ENCODE measurements at regions of chr11 and their contacts with region 1.

Region 1: DNA sequence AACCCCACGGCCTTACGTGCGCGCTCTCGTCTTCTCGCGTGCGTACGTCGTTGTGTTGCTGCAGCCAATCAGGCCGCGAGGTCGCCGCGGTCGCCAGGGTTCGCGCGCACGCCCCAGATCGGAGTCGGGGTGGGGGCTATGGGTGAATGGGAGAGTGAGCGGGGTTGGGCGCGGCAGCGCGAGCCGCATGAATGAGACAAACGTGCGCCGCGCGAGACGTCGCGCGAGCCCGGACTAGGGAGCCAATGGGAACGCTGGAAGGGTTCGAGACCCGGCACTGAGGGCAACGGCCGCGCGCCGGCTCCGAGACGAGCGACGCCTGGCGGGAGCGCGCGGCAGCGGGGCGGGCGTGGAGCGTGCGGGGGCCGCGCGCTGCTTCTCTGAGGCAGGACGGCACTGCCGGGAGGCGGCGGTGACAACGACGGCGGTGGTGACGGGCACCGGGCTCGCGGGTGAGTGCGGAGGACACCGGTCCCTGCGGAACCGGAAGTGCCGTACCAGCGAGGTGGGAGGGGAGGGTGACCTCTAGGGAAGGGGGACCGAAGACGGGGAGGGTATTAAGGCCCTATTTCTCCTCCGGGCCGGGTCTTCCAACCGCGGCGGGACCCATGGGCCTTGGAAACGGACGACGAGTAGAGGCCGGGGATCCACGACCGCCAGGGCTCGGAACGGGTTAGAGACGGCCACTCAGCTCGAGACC is at the start of gene ZDHHC5:
- DNase-seq: peak; percentile 100
- ATAC-seq: peak; percentile 88
- H3K4me3 Mint-ChIP-seq: peak within 1 kb of the TSS; percentile 99
- H3K27ac Mint-ChIP-seq: peak within 1 kb of the TSS; percentile 99
- H3K4me1 Mint-ChIP-seq: peaks cover 37% of the 10 kb centered on the region
- H3K27me3 Mint-ChIP-seq: no peaks in the 10 kb centered on the region
- total RNA-seq, gene ZDHHC5: 46.2 to 60.0 TPM

Region 2: GRCh38 chr11:57641011-57641807 is 26.7 kb before region 1 on chr11:
- CTCF ChIA-PET with region 1: no interaction called
- POLR2A ChIA-PET with region 1: no interaction called
- intact Hi-C with region 1: no loop called
- DNase-seq: peak; percentile 39
- ATAC-seq: peak; percentile 31
- H3K4me3 Mint-ChIP-seq: no peak overlapping the region
- H3K27ac Mint-ChIP-seq: no peak overlapping the region
- H3K4me1 Mint-ChIP-seq: peaks cover 10% of the 10 kb centered on the region
- H3K27me3 Mint-ChIP-seq: peaks cover 21% of the 10 kb centered on the region

Region 3: DNA sequence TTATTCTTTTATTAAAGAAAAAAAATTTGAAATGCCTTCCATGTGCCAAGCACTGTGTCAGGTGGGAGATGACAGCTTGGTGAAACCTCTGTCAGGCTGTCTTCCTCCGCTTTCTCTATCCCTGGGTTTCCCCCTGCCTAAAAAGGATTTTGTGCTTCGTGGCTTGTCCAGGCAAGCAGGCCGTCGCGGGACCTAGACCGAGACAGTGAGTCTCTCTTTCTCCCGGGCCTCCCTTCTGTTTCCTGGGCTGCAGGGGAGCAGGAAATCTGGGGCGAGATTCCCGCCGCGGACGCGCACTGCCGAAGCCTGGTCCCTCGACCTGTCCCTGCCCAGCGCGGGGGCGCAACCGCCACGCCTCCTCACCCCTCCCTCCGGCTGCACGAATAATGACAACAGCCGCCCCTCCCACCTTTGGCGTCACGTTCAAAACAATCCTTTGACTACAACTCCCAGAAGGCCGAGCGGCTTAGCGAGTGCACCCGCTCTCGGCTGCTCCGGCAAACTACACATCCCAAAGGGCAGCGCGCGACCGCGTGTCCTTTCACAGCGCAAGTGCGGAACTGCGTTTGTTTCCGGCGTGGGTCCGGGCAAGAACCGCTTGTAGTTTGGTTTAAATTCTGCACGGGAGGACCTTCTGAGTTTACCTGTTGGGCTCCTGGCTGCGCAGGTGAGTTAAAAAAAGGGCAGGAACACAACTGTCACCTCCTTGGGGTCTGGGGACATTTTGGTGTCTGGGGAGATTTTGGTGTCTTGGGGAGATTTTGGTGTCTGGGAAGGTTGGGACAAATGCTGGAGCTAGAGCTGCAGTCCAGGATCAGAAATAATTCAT is 10.5 kb before region 1 on chr11 and contains the start of gene CLP1:
- CTCF ChIA-PET with region 1: interaction called, 6 read pairs
- POLR2A ChIA-PET with region 1: interaction called, 5 read pairs
- intact Hi-C with region 1: loop called (anchors 1 kb)
- DNase-seq: peak; percentile 100
- ATAC-seq: peak; percentile 98
- H3K4me3 Mint-ChIP-seq: peak within 1 kb of the TSS; percentile 83
- H3K27ac Mint-ChIP-seq: peak within 1 kb of the TSS; percentile 95
- H3K4me1 Mint-ChIP-seq: peaks cover 29% of the 10 kb centered on the region
- H3K27me3 Mint-ChIP-seq: no peaks in the 10 kb centered on the region
- total RNA-seq, gene CLP1: 11.9 to 15.9 TPM

Region 4: DNA sequence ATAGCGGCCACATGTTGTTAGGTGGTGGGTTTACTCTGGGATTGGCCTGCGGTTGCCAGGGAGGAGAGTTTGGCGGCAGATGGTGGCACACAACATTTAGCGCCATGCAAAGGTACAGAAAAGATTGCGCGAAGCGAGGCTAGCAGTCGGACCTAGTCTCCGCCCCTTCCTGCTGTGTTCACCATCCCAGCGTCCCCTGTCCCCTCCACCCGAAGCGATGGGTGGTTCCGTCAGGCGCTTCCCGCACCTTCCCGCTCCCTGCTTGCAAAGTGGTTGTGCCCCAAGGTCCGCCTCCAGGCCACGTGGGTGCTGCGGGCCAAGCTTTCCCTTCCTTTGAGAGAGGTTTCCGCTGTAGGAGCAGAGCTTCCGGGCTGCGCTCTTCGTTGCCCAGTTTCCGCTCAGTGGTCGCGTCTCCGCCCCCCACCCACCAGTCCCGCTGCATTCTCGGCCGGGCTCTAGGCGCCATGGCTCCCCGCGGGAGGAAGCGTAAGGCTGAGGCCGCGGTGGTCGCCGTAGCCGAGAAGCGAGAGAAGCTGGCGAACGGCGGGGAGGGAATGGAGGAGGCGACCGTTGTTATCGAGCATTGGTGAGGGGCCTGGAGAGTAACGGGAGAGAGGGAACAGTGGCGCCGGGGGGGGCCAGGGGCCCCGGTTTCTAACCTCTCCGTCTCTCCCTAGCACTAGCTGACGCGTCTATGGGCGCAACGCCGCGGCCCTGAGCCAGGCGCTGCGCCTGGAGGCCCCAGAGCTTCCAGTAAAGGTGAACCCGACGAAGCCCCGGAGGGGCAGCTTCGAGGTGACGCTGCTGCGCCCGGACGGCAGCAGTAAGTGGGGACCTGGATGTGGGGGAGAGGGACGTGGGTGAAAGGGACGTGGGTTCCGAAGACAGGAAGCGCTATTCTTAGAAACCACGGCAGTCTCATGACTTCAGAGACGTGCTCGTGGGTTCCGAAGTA is 73.5 kb after region 1 on chr11 and contains the start of gene SELENOH:
- CTCF ChIA-PET with region 1: interaction called, 8 read pairs
- POLR2A ChIA-PET with region 1: no interaction called
- intact Hi-C with region 1: loop called (anchors 1 kb)
- DNase-seq: peak; percentile 98
- ATAC-seq: peak; percentile 94
- H3K4me3 Mint-ChIP-seq: peak within 1 kb of the TSS; percentile 98
- H3K27ac Mint-ChIP-seq: peak within 1 kb of the TSS; percentile 100
- H3K4me1 Mint-ChIP-seq: peaks cover 28% of the 10 kb centered on the region
- H3K27me3 Mint-ChIP-seq: no peaks in the 10 kb centered on the region
- total RNA-seq, gene SELENOH: 117 to 244 TPM

Region 5: GRCh38 chr11:58046231-58046630 is 378.3 kb after region 1 on chr11:
- CTCF ChIA-PET with region 1: no interaction called
- POLR2A ChIA-PET with region 1: no interaction called
- intact Hi-C with region 1: no loop called
- DNase-seq: no peak
- ATAC-seq: no peak
- H3K4me3 Mint-ChIP-seq: no peak overlapping the region
- H3K27ac Mint-ChIP-seq: no peak overlapping the region
- H3K4me1 Mint-ChIP-seq: no peaks in the 10 kb centered on the region
- H3K27me3 Mint-ChIP-seq: peaks cover 8% of the 10 kb centered on the region

Region 6: GRCh38 chr11:59550368-59550841 is 1882.5 kb after region 1 on chr11:
- CTCF ChIA-PET with region 1: no interaction called
- POLR2A ChIA-PET with region 1: no interaction called
- intact Hi-C with region 1: loop called in 1 of 2 experiments (anchors 10 kb)
- DNase-seq: peak; percentile 95
- ATAC-seq: peak; percentile 91
- H3K4me3 Mint-ChIP-seq: peak overlapping the region; percentile 79
- H3K27ac Mint-ChIP-seq: peak overlapping the region; percentile 96
- H3K4me1 Mint-ChIP-seq: peaks cover 28% of the 10 kb centered on the region
- H3K27me3 Mint-ChIP-seq: peaks cover 2% of the 10 kb centered on the region

Measured in activated CD4-positive, alpha-beta T cell treated with anti-CD3 and anti-CD28 coated beads for 36 hours (primary cell).